Dorsolateral prefrontal cortex (tissue), 120 donors: ENCODE measurements at regions of chr15 and their contacts with region 1.

Region 1: DNA sequence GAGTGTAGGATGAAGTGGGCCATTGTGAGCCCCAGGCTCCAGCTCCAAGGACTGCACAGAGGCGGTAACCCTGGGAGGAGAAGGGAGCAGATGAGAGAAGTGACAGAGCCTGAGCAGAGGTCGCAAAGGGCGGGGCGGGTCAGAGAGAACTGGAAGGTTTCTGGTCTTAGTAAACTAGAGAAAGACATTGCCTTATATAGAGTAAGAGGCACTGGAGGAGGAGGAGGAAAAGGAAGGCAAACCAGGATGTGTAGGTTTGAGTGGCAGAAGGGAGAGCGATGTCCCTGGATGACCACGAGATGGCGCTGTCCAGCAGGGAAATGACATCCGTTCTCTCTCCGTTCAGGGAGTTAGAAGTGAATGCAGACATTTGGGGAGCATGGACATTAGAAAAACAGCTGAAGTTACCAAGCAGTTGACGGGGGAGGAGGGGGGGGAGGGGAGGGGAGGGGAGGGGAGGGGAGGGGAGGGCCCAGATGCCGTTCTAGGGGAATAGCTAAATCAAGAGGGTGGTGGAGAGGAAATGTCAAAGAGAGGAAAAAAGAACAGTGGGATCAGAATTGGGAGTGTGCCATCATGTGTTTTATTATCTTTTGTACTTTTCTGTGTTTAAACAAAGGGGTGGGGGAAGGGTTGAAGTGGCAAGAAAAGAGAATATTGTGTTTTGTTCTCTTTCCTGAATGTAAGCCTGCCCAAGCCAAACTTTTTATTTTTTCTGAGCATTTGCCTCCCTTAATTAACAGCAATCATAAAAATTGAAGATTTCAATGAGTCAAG is 48.8 kb downstream of the STARD5 start:
- DNase-seq: peak; percentile 49 to 85 (median 70)
- H3K4me3 ChIP-seq: no peak overlapping the region
- H3K27ac ChIP-seq: peak overlapping the region in 14 of 59 donors; percentile 1 to 71 (median 38)
- H3K27me3 ChIP-seq: no peaks in the 10 kb centered on the region
- CTCF ChIP-seq: peak; percentile 62 to 92 (median 82)

Region 2: DNA sequence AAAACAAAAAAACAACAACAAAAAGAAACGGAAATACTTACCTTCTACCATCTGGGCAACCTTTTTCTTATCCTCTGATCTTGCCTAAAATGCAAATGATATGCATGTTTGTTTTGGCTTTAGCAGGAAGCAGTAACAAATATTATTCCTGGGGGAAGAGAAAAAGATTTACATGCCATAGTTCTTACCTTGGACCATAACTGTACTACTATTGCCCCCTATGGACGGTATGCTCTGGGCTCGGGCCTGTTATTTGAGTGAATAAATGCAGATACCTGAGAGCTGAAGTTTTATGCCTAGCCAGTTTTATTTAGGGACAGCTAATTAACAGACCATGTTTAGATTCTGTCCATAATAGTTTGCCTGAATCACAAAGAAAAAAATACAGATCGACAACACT is 61.4 kb after region 1 on chr15:
- intact Hi-C with region 1: loop called (anchors 5 to 10 kb)
- DNase-seq: no peak
- H3K4me3 ChIP-seq: no peak overlapping the region
- H3K27ac ChIP-seq: no peak overlapping the region
- H3K27me3 ChIP-seq: no peaks in the 10 kb centered on the region
- CTCF ChIP-seq: peak in 38 of 56 donors; percentile 7 to 55 (median 28)

Region 3: GRCh38 chr15:81400640-81401236 is 125.6 kb after region 1 on chr15:
- intact Hi-C with region 1: loop called (anchors 2 to 5 kb)
- DNase-seq: peak in 1 of 10 donors; percentile 6
- H3K4me3 ChIP-seq: no peak overlapping the region
- H3K27ac ChIP-seq: no peak overlapping the region
- H3K27me3 ChIP-seq: no peaks in the 10 kb centered on the region
- CTCF ChIP-seq: peak; percentile 48 to 82 (median 70)

Region 4: DNA sequence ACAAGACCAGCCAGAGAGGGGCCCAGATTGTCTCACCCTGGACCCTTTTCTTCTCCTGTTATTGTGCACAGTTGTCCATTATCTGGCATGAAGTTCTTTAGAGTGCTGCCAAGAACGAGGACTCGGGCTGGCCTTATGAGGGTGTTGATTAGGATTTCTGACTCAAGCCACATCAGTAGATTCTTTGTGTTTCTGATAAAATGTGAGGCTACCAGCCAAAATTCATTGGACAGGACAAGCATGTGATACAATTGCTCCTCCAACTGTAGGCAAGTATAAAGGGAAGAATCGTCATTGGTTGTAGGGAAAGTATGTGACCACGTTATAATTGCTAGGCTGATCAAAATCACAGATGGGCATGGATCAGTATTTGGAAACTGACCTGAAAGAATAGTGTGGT is 198.1 kb after region 1 on chr15:
- intact Hi-C with region 1: loop called (anchors 5 to 10 kb)
- DNase-seq: peak in 1 of 10 donors; percentile 44
- H3K4me3 ChIP-seq: peak overlapping the region in 6 of 59 donors; percentile 2 to 35 (median 15)
- H3K27ac ChIP-seq: peak overlapping the region in 3 of 59 donors; percentile 8 to 41 (median 9)
- H3K27me3 ChIP-seq: peaks cover 0 to 4% (median 0%) of the 10 kb centered on the region in 45 donors
- CTCF ChIP-seq: peak in 1 of 56 donors; percentile 20